Heart right ventricle (tissue), 16 donors: ENCODE measurements at regions of chrX and their contacts with region 1.

Region 1: GRCh38 chrX:65581661-65582339 is 47.2 kb upstream of the LAS1L start:
- DNase-seq: peak in 1 of 2 donors; percentile 61
- ATAC-seq: peak; percentile 71 to 94 (median 85)
- H3K4me3 ChIP-seq: no peak overlapping the region
- H3K27ac ChIP-seq: no peak overlapping the region
- H3K4me1 ChIP-seq: peaks cover 0 to 8% (median 0%) of the 10 kb centered on the region in 9 donors
- H3K27me3 ChIP-seq: peaks cover 0 to 58% (median 0%) of the 10 kb centered on the region in 7 donors
- CTCF ChIP-seq: peak; percentile 46 to 83 (median 72)

Region 2: GRCh38 chrX:65985922-65986588 is 404.3 kb after region 1 on chrX:
- intact Hi-C with region 1: loop called (anchors 1 to 5 kb)
- DNase-seq: peak in 1 of 2 donors; percentile 46
- ATAC-seq: peak; percentile 78 to 89 (median 85)
- H3K4me3 ChIP-seq: no peak overlapping the region
- H3K27ac ChIP-seq: peak overlapping the region in 1 of 10 donors; percentile 72
- H3K4me1 ChIP-seq: peaks cover 0 to 28% (median 0%) of the 10 kb centered on the region in 9 donors
- H3K27me3 ChIP-seq: peaks cover 0 to 35% (median 0%) of the 10 kb centered on the region in 7 donors
- CTCF ChIP-seq: peak; percentile 30 to 69 (median 58)

Region 3: GRCh38 chrX:66110112-66110511 is 528.3 kb after region 1 on chrX:
- intact Hi-C with region 1: loop called in 3 of 10 experiments (anchors 10 kb)
- DNase-seq: no peak
- ATAC-seq: no peak
- H3K4me3 ChIP-seq: no peak overlapping the region
- H3K27ac ChIP-seq: no peak overlapping the region
- H3K4me1 ChIP-seq: no peaks in the 10 kb centered on the region
- H3K27me3 ChIP-seq: peaks cover 0 to 78% (median 0%) of the 10 kb centered on the region in 7 donors
- CTCF ChIP-seq: peak in 7 of 9 donors; percentile 35 to 70 (median 45)

Region 4: DNA sequence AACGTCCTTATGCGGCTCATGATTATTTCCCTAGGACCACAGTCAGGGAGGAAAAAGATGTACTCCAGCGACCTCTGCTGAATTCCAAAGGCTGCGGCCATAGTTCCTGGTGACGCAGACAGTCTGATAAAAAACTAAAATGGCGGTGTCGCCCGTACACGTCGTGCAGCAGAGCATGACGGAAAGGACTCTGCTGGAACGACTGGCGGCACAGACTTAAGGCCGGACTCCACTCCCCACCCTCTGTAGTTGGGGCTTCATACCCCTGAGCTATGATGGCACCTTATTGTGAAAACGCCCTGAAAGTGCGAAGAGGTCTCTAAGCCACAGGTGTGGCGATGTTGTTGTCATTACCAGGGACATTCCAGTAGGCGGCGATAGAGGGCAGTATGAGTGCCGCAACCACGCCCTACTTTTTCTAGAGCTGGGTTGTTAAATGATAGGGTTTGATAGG is 1147.0 kb after region 1 on chrX:
- intact Hi-C with region 1: loop called in 3 of 10 experiments (anchors 10 kb)
- DNase-seq: peak; percentile 13 to 16
- ATAC-seq: peak in 7 of 8 donors; percentile 58 to 84 (median 63)
- H3K4me3 ChIP-seq: peak overlapping the region in 9 of 10 donors; percentile 21 to 51 (median 46)
- H3K27ac ChIP-seq: no peak overlapping the region
- H3K4me1 ChIP-seq: no peaks in the 10 kb centered on the region
- H3K27me3 ChIP-seq: peaks cover 0 to 3% (median 0%) of the 10 kb centered on the region in 7 donors
- CTCF ChIP-seq: peak; percentile 22 to 65 (median 52)